B cell (primary cell): ENCODE measurements at regions of chr19 and their contacts with region 1.

Region 1: GRCh38 chr19:10408511-10409283 is 5.4 kb upstream of the CDC37 start:
- DNase-seq: peak; percentile 85
- ATAC-seq: peak; percentile 46
- H3K4me3 ChIP-seq: peak overlapping the region in 4 of 5 experiments; percentile 0 to 50 (median 25)
- H3K4me3 Mint-ChIP-seq: peak overlapping the region; percentile 71
- H3K27ac ChIP-seq: peak overlapping the region; percentile 78
- H3K27ac Mint-ChIP-seq: peak overlapping the region; percentile 74
- H3K4me1 ChIP-seq: peaks cover 69 to 97% of the 10 kb centered on the region in 2 donors
- H3K4me1 Mint-ChIP-seq: peaks cover 72% of the 10 kb centered on the region
- H3K27me3 ChIP-seq: no peaks in the 10 kb centered on the region
- H3K27me3 Mint-ChIP-seq: no peaks in the 10 kb centered on the region
- CTCF ChIP-seq: no peak

Region 2: GRCh38 chr19:10424011-10424637 is 15.4 kb after region 1 on chr19:
- CTCF ChIA-PET with region 1: interaction called, 282 read pairs
- POLR2A ChIA-PET with region 1: interaction called, 15 read pairs
- intact Hi-C with region 1: loop called (anchors 2 kb)
- DNase-seq: peak; percentile 73
- ATAC-seq: peak; percentile 3
- H3K4me3 ChIP-seq: peak overlapping the region; percentile 19 to 66 (median 41)
- H3K4me3 Mint-ChIP-seq: peak overlapping the region; percentile 91
- H3K27ac ChIP-seq: no peak overlapping the region
- H3K27ac Mint-ChIP-seq: peak overlapping the region; percentile 95
- H3K4me1 ChIP-seq: peaks cover 78 to 85% of the 10 kb centered on the region in 2 donors
- H3K4me1 Mint-ChIP-seq: peaks cover 79% of the 10 kb centered on the region
- H3K27me3 ChIP-seq: peaks cover 0 to 52% (median 27%) of the 10 kb centered on the region in 4 experiments
- H3K27me3 Mint-ChIP-seq: peaks cover 30% of the 10 kb centered on the region
- CTCF ChIP-seq: peak; percentile 74